ENCODE measurements at regions of chr20 and their contacts with region 1.

Region 1: GRCh38 chr20:63894358-63895201 is at the start of gene DNAJC5:
- DNase-seq: peak; percentile 97
- ATAC-seq: peak; percentile 92
- H3K4me3 Mint-ChIP-seq: peak within 1 kb of the TSS; percentile 88
- H3K27ac Mint-ChIP-seq: peak within 1 kb of the TSS; percentile 90
- H3K4me1 Mint-ChIP-seq: peaks cover 45% of the 10 kb centered on the region
- H3K27me3 Mint-ChIP-seq: no peaks in the 10 kb centered on the region
- CTCF ChIP-seq: no peak
- total RNA-seq, gene DNAJC5: 27.5 and 28.6 TPM in 2 replicates

Region 2: DNA sequence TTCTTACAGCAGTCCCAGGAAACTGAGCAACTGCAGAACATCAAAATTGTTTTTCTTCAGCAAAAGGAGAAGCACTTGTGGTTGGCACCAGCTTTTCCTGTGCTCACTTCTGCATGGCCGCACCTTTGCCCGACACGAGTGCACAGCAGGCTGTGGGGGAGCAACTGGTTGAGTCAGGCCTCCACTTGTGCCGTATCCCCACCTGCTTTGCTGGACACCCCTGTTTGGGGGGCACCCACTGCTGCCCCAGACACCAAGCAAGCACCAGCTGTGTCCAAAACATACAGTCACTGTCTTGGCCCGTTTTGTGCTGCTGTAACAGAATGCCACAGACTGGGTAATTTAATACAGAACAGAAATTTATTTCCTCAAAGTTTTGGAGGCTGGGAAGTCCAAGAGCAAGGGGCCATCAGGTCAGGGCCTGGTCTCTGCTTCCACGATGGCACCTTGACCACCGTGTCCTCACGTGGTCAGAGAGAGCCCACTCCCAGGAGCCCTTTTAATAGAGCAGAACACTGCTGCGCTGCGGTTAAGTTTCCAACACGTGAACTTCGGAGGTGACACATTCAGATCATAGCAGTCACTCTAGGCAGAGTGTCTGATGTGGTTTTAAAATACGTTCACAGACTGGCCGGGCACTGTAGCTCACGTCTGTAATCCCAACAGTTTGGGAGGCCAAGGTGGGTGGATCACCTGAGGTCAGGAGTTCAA is 259.0 kb before region 1 on chr20:
- CTCF ChIA-PET with region 1: no interaction called
- POLR2A ChIA-PET with region 1: no interaction called
- intact Hi-C with region 1: loop called (anchors 5 kb)
- DNase-seq: peak; percentile 57
- ATAC-seq: peak; percentile 65
- H3K4me3 Mint-ChIP-seq: peak overlapping the region; percentile 64
- H3K27ac Mint-ChIP-seq: peak overlapping the region; percentile 97
- H3K4me1 Mint-ChIP-seq: peaks cover 83% of the 10 kb centered on the region
- H3K27me3 Mint-ChIP-seq: no peaks in the 10 kb centered on the region
- CTCF ChIP-seq: no peak

Region 3: GRCh38 chr20:63739130-63740069 is 155.2 kb before region 1 on chr20 and contains the start of gene SLC2A4RG:
- CTCF ChIA-PET with region 1: no interaction called
- POLR2A ChIA-PET with region 1: no interaction called
- intact Hi-C with region 1: loop called (anchors 1 kb)
- DNase-seq: peak; percentile 73
- ATAC-seq: peak; percentile 65
- H3K4me3 Mint-ChIP-seq: peak within 1 kb of the TSS; percentile 48
- H3K27ac Mint-ChIP-seq: no peak within 1 kb of the TSS
- H3K4me1 Mint-ChIP-seq: peaks cover 28% of the 10 kb centered on the region
- H3K27me3 Mint-ChIP-seq: no peaks in the 10 kb centered on the region
- CTCF ChIP-seq: no peak
- total RNA-seq, gene SLC2A4RG: 20.9 and 28.1 TPM in 2 replicates

Region 4: GRCh38 chr20:63829932-63830835 is 64.4 kb before region 1 on chr20:
- CTCF ChIA-PET with region 1: no interaction called
- POLR2A ChIA-PET with region 1: no interaction called
- intact Hi-C with region 1: loop called (anchors 2 kb)
- DNase-seq: no peak
- ATAC-seq: peak; percentile 12
- H3K4me3 Mint-ChIP-seq: peak overlapping the region; percentile 90
- H3K27ac Mint-ChIP-seq: peak overlapping the region; percentile 64
- H3K4me1 Mint-ChIP-seq: peaks cover 12% of the 10 kb centered on the region
- H3K27me3 Mint-ChIP-seq: peaks cover 35% of the 10 kb centered on the region
- CTCF ChIP-seq: no peak

Region 5: DNA sequence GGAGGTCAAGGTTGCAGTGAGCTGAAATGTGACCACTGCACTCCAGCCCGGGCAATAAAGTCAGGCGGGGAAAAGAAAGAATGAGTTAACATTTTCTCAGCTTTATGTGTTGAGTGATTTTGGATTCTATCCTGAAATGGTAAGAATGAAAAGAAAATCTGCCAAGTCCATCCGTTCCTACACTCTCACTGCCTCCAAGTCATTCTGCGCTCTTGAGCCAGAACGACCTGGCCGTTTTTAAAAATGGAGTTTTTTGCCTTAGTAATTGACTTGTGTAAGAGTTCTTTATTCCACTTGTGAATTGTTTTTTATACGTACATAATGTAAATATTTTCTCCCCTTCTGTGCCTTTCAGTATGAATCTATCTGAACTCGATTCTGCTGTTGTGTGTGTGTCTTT is 29.1 kb after region 1 on chr20:
- CTCF ChIA-PET with region 1: no interaction called
- POLR2A ChIA-PET with region 1: no interaction called
- intact Hi-C with region 1: no loop called
- DNase-seq: no peak
- ATAC-seq: no peak
- H3K4me3 Mint-ChIP-seq: no peak overlapping the region
- H3K27ac Mint-ChIP-seq: no peak overlapping the region
- H3K4me1 Mint-ChIP-seq: peaks cover 6% of the 10 kb centered on the region
- H3K27me3 Mint-ChIP-seq: no peaks in the 10 kb centered on the region
- CTCF ChIP-seq: no peak

Region 6: DNA sequence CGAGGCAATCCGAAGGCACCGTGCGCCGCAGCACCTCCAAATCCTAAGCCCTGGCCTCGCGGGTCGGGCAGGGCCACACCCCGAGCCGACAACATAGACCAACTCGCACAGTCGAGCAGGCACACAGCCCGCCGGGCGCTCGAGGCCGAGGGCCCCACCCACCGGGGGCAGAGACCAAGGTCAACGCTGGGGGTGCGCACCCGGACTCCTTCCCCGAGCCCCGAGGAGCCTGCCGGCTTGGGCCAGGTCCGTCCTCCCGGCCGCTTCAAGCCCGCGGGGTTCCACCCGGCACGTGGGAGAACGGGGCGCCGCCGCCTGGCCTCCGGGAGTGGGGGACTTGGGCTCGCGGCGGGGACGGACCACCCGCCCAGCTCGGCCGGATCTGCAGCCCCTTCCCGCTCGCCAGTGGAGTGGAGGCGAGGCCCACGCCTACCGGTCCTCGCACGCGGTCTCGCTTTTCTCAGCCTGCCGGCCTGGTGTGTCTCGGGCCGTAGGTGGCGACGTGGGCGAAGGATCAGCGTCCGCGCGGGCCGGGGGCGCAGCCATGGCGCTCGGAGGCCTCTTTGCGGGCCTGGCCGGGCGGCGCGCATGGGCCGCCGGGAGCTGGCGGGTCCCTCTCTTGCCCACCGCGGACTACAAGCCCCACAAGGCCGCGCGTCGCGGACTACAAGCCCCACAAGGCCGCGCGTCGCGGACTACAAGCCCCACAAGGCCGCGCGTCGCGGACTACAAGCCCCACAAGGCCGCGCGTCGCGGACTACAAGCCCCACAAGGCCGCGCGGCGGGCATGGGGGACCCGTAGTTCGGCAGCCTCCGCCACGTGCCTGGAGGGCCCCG is 61.5 kb after region 1 on chr20 and contains the start of gene UCKL1:
- CTCF ChIA-PET with region 1: no interaction called
- POLR2A ChIA-PET with region 1: interaction called, 10 read pairs
- intact Hi-C with region 1: loop called (anchors 1 kb)
- DNase-seq: peak; percentile 87
- ATAC-seq: peak; percentile 78
- H3K4me3 Mint-ChIP-seq: peak within 1 kb of the TSS; percentile 87
- H3K27ac Mint-ChIP-seq: peak within 1 kb of the TSS; percentile 85
- H3K4me1 Mint-ChIP-seq: peaks cover 49% of the 10 kb centered on the region
- H3K27me3 Mint-ChIP-seq: no peaks in the 10 kb centered on the region
- CTCF ChIP-seq: no peak
- total RNA-seq, gene UCKL1: 43.6 and 49.7 TPM in 2 replicates

Region 7: DNA sequence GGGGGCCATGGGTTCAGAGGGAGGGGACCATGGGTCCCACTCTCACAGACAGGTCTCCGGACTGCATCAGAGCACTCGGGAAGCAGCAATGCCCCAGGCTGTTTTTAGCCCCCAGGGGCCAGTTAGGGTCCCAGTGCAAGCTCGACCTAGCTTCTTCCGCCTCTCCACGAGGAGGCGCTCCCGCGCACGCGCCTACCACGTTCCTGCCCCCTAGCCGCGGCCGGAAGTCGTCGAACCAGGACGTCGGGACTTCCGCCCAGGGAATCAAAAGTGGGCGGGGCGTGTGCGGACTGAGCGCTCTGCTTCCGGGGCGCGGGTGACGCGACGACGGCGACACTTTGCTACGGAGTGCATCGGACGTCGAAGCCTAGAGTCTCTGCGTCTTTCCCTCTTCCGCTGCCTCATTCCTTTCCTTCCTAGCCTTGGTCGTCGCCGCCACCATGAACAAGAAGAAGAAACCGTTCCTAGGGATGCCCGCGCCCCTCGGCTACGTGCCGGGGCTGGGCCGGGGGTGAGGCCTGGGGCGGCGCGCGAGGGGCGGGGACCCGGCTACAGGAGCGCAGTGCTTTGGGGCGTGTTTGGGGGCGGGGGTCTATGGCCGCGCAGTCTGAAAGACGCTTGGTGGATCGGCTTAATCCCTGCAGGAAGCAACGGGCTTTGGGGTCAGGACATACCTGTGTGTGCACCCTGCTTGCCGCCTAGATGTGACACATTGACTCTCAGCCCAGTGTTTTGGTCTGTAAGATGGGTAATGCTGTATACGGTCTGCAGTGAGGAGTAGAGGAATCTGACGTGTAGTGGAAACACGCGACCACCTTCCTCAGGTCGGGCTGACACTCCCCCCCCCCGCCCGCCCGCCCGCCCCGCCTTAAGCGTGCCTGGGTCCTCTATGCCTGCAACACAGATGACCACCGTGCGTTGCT is 86.5 kb after region 1 on chr20 and contains the start of gene PRPF6:
- CTCF ChIA-PET with region 1: no interaction called
- POLR2A ChIA-PET with region 1: no interaction called
- intact Hi-C with region 1: loop called (anchors 1 kb)
- DNase-seq: peak; percentile 90
- ATAC-seq: peak; percentile 65
- H3K4me3 Mint-ChIP-seq: peak within 1 kb of the TSS; percentile 92
- H3K27ac Mint-ChIP-seq: peak within 1 kb of the TSS; percentile 94
- H3K4me1 Mint-ChIP-seq: peaks cover 50% of the 10 kb centered on the region
- H3K27me3 Mint-ChIP-seq: no peaks in the 10 kb centered on the region
- CTCF ChIP-seq: peak; percentile 25
- total RNA-seq, gene PRPF6: 75.7 and 75.8 TPM in 2 replicates